Sigmoid colon (tissue), 7 donors: ENCODE measurements at regions of chr6 and their contacts with region 1.

Region 1: GRCh38 chr6:155248008-155249001 is 15.5 kb upstream of the CLDN20 start:
- DNase-seq: peak; percentile 84
- H3K4me3 ChIP-seq: peak overlapping the region in 1 of 4 donors; percentile 11
- H3K27ac ChIP-seq: peak overlapping the region; percentile 48 to 83 (median 72)
- H3K4me1 ChIP-seq: peaks cover 0 to 21% (median 9%) of the 10 kb centered on the region in 4 donors
- H3K27me3 ChIP-seq: no peaks in the 10 kb centered on the region
- CTCF ChIP-seq: peak; percentile 59 to 78 (median 72)
- EP300 ChIP-seq: no peak
- POLR2A ChIP-seq: no peak

Region 2: DNA sequence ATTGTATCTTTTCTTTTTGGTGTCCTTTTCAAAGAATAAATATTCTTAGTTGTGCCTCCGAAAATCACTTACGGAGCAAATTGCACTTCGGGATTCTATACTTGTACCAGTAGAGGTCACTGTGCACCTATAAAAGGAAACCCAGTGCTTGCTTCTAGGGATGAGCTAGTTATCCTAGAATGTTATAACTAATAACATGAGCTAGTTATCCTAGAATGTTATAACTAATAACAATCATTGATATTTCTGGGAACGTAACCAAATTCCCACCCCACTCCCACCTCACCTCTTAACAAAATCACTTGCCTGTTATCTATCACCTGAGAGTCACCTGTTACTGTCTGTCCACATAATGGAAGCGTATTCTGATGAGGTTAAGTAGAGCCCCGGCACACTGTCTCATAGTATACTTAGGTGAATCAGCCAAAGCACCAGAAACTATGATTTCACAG is 380.1 kb before region 1 on chr6:
- intact Hi-C with region 1: loop called (anchors 10 kb)
- DNase-seq: no peak
- H3K4me3 ChIP-seq: no peak overlapping the region
- H3K27ac ChIP-seq: no peak overlapping the region
- H3K4me1 ChIP-seq: peaks cover 0 to 8% (median 0%) of the 10 kb centered on the region in 4 donors
- H3K27me3 ChIP-seq: no peaks in the 10 kb centered on the region
- CTCF ChIP-seq: peak; percentile 39 to 68 (median 46)
- EP300 ChIP-seq: no peak
- POLR2A ChIP-seq: no peak

Region 3: DNA sequence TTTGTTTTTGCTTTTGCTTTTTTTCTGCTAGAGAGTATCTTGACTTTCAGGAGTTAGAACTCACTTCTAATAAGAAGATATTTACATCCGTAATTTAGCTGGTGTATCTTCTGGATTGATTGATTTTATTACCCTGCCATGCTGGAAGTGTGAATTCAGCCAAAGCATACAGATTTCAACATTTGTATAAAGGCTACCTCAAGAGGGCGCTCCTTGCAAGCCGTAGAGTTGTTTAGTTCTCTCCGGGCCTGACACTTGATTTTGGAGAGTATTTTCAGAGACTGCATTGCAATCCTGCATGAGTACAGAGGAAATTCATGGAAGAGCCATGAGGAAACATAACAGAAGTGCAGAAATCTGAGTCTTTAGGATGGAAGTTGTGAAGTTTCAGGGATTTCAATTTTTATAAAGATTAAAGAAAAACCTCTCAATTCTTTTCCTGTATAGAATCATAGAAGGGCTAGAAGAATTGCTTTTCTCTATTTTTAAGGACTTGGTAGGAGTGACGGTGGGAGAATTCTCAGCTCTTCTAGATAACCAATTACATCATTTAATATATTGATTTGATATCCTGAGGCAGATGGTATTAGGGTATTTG is 319.9 kb before region 1 on chr6:
- intact Hi-C with region 1: loop called (anchors 2 kb)
- DNase-seq: no peak
- H3K4me3 ChIP-seq: no peak overlapping the region
- H3K27ac ChIP-seq: no peak overlapping the region
- H3K4me1 ChIP-seq: peaks cover 0 to 19% (median 16%) of the 10 kb centered on the region in 4 donors
- H3K27me3 ChIP-seq: no peaks in the 10 kb centered on the region
- CTCF ChIP-seq: peak; percentile 26 to 65 (median 62)
- EP300 ChIP-seq: no peak
- POLR2A ChIP-seq: no peak